ENCODE measurements at regions of chr1 and their contacts with region 1.

Region 1: DNA sequence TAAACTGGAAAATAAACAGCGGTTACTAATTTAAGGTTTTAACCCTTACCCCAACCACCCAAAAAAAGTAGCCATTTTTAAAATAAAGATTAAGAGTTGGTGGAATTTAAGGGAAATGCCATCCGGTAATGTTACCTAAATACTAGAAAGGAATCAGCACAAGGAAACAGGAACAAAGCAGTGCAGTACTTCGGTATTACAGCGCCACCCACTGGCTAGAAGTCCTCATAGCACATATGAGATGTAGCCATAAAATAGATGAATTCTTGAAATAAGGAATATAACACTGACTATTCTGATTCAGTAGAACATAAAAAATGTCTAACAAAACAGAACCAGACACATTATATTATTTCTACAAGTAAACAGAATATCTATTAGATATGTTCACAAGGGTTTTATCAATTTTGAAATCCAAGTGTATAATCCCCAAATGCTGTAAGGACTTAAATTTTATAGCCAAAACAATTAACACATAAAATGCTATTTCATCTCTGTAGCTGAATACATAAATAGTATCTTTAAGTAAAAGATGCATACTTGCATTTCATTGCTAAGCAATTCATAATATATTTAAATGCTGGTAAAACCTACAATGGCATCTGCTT is 58.8 kb downstream of the FRRS1 start:
- DNase-seq: peak; percentile 72 to 80
- H3K4me3 ChIP-seq: no peak overlapping the region
- H3K27ac ChIP-seq: no peak overlapping the region
- H3K4me1 ChIP-seq: peaks cover 0 to 4% of the 10 kb centered on the region in 2 donors
- H3K27me3 ChIP-seq: no peaks in the 10 kb centered on the region
- CTCF ChIP-seq: peak; percentile 68 to 91 (median 85)
- POLR2A ChIP-seq: no peak

Region 2: GRCh38 chr1:99177465-99177864 is 530.2 kb before region 1 on chr1:
- intact Hi-C with region 1: loop called (anchors 5 kb)
- DNase-seq: no peak
- H3K4me3 ChIP-seq: no peak overlapping the region
- H3K27ac ChIP-seq: no peak overlapping the region
- H3K4me1 ChIP-seq: peaks cover 0 to 6% of the 10 kb centered on the region in 2 donors
- H3K27me3 ChIP-seq: no peaks in the 10 kb centered on the region
- CTCF ChIP-seq: no peak
- POLR2A ChIP-seq: no peak

Region 3: DNA sequence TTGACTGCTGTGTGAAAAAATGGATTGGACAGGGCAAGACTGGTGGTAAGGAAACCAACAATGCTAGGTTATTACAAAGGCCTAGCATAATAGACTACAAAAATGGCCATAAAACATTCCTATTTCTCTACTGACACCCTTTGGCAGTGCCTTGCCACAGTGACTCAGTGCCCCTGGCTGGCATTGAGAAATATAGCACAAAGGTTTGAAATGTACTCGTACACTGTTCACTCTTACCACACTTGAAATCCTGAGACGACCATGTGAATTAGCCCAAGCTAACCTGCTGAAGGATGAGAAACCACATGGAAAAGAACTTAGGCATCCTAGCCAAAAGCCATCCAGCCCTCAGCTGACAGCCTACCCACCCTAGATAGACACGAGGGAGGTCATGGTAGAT is 211.6 kb before region 1 on chr1:
- intact Hi-C with region 1: loop called (anchors 10 kb)
- DNase-seq: no peak
- H3K4me3 ChIP-seq: no peak overlapping the region
- H3K27ac ChIP-seq: no peak overlapping the region
- H3K4me1 ChIP-seq: no peaks in the 10 kb centered on the region
- H3K27me3 ChIP-seq: no peaks in the 10 kb centered on the region
- CTCF ChIP-seq: no peak
- POLR2A ChIP-seq: no peak

Measured in thyroid gland (tissue), 4 donors.